HCT116 (cell line): ENCODE measurements at regions of chr3 and their contacts with region 1.

Region 1: GRCh38 chr3:113838631-113839209 is at the start of gene GRAMD1C:
- DNase-seq: peak; percentile 82
- ATAC-seq: peak; percentile 97
- H3K4me3 ChIP-seq: peak within 1 kb of the TSS; percentile 66 to 74
- H3K27ac ChIP-seq: peak within 1 kb of the TSS; percentile 21; the same call in 1 of the 2 replicates
- H3K4me1 ChIP-seq: peaks cover 0 to 15% of the 10 kb centered on the region in 2 experiments; a peak in 1 of 4 replicates
- H3K27me3 ChIP-seq: no peaks in the 10 kb centered on the region
- CTCF ChIP-seq: peak; percentile 73 to 90 (median 83)
- POLR2A ChIP-seq: no peak
- RAD21 ChIP-seq: peak; percentile 75
- total RNA-seq, gene GRAMD1C: 7.9 TPM

Region 2: DNA sequence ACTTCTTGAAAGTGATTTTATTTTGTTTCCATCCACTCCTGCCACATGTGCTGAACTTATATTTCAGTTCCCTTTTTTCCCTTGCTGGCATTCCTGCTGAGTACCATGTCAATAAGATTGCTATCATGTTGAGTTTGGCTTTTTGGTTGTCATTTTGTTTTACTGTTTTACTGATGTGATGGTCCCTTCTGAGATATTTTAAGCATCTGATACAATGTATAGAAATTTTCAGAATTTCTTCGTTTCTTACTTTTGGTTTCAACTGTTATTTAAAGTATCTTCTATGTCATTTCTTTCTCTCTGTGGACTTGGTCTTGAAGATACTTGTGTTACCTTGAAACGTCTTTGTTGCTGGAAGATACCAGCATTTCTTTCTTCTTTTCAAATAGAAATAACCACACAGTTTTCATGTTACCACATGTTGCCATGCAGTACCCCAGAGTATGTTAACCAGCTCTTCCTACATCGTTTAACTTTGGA is 292.3 kb before region 1 on chr3:
- CTCF ChIA-PET with region 1: no interaction called
- POLR2A ChIA-PET with region 1: no interaction called
- RAD21 ChIA-PET with region 1: no interaction called
- intact Hi-C with region 1: no loop called
- DNase-seq: no peak
- ATAC-seq: no peak
- H3K4me3 ChIP-seq: no peak overlapping the region
- H3K27ac ChIP-seq: no peak overlapping the region
- H3K4me1 ChIP-seq: no peaks in the 10 kb centered on the region
- H3K27me3 ChIP-seq: no peaks in the 10 kb centered on the region
- CTCF ChIP-seq: no peak
- POLR2A ChIP-seq: no peak
- RAD21 ChIP-seq: no peak

Region 3: GRCh38 chr3:113825090-113825489 is 13.6 kb before region 1 on chr3:
- CTCF ChIA-PET with region 1: interaction called, 12 read pairs
- POLR2A ChIA-PET with region 1: no interaction called
- RAD21 ChIA-PET with region 1: no interaction called
- intact Hi-C with region 1: no loop called
- DNase-seq: no peak
- ATAC-seq: peak; percentile 88
- H3K4me3 ChIP-seq: no peak overlapping the region
- H3K27ac ChIP-seq: no peak overlapping the region
- H3K4me1 ChIP-seq: peaks cover under 1 to 7% of the 10 kb centered on the region in 2 experiments; a peak in 3 of 4 replicates
- H3K27me3 ChIP-seq: no peaks in the 10 kb centered on the region
- CTCF ChIP-seq: peak in 2 of 3 experiments; percentile 47 to 48; a peak in 4 of 6 replicates
- POLR2A ChIP-seq: no peak
- RAD21 ChIP-seq: no peak

Region 4: GRCh38 chr3:114727373-114727772 is 888.7 kb after region 1 on chr3:
- CTCF ChIA-PET with region 1: no interaction called
- POLR2A ChIA-PET with region 1: no interaction called
- RAD21 ChIA-PET with region 1: no interaction called
- intact Hi-C with region 1: no loop called
- DNase-seq: no peak
- ATAC-seq: no peak
- H3K4me3 ChIP-seq: no peak overlapping the region
- H3K27ac ChIP-seq: no peak overlapping the region
- H3K4me1 ChIP-seq: peaks cover 25 to 37% of the 10 kb centered on the region in 2 experiments
- H3K27me3 ChIP-seq: no peaks in the 10 kb centered on the region
- CTCF ChIP-seq: no peak
- POLR2A ChIP-seq: no peak
- RAD21 ChIP-seq: no peak